H1 (cell line): ENCODE measurements at regions of chr2 and their contacts with region 1.

Region 1: DNA sequence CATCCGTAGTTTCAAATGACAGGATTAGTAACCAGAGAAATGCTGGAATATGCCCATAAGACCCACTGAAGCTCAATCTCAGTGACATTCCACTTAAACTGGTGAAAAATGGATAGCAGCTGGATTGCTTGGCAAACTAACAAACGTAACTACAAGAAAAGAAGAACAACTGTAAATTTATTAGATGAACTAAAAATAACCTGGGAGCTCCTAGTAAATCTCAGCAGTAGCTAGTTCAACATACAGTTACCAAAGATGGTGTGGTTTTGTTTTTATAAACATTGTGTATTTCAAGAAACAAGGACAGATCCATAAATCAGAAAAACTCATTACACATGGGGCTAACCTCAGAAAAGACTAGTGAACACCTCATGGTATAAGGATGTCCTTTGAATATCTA is 531.9 kb downstream of the XIRP2 start:
- DNase-seq: no peak
- H3K4me3 ChIP-seq: no peak overlapping the region
- H3K27ac ChIP-seq: no peak overlapping the region
- H3K4me1 ChIP-seq: peaks cover 0 to 9% (median 3%) of the 10 kb centered on the region in 4 experiments; a peak in 2 of 7 replicates
- H3K27me3 ChIP-seq: no peaks in the 10 kb centered on the region
- CTCF ChIP-seq: no peak
- EP300 ChIP-seq: no peak
- POLR2A ChIP-seq: no peak
- RAD21 ChIP-seq: no peak

Region 2: GRCh38 chr2:167401309-167401708 is 18.9 kb before region 1 on chr2:
- CTCF ChIA-PET with region 1: interaction called, 10 read pairs
- POLR2A ChIA-PET with region 1: no interaction called
- DNase-seq: no peak
- H3K4me3 ChIP-seq: no peak overlapping the region
- H3K27ac ChIP-seq: no peak overlapping the region
- H3K4me1 ChIP-seq: peaks cover 0 to 3% (median 1%) of the 10 kb centered on the region in 4 experiments; a peak in 3 of 7 replicates
- H3K27me3 ChIP-seq: no peaks in the 10 kb centered on the region
- CTCF ChIP-seq: peak in 1 of 3 experiments; percentile 21; a peak in 1 of 4 replicates
- EP300 ChIP-seq: no peak
- POLR2A ChIP-seq: no peak
- RAD21 ChIP-seq: peak; percentile 52 to 61